Motor neuron (in vitro differentiated cells): ENCODE measurements at regions of chr6 and their contacts with region 1.

Region 1: DNA sequence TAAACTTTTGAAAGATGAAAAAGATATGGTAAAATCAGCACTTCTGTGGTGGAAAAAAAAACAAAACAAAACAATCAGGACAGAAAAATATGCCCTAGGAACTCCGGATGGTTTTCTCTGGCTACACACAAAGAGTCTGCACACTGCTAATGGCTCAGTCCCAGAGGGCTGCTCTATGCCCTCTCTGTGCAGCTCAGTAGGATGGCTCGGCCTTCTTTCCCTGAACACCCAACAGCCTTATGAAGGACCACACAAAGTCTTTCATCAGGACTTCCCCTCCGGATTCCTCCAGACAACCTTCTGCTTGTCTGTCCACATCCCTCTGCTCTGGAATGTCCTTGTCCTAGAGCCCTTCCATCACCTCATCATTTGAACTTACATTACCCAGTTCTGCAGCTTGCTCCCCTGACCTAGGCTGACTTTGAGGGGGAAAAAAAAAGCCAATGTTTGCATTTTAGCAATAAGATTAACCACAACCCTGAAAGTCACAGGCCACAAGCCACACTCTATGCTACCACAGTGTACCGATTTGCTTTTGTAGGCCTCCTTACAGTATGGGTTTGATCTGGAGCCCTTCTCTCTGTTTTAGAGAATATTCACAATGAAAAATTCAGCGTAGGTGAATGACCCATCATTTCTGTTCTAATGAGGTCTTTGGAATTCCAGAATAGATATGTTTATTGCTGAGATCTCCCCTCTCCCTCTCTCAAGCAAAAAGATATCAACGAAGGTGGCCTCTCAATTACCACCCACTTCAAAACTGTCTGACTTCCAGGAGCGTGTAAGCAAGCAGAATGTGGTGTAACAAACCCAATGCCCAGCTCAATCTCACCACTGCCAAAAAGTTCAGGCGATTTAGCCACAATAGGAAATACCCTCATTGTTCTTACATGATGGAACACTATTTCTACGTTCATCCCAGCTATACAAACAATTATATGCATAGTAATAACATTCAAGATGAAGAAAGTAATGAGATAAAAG is 164.0 kb downstream of the GMDS start:
- ATAC-seq: no peak
- H3K4me3 ChIP-seq: no peak overlapping the region
- H3K27ac ChIP-seq: no peak overlapping the region
- H3K4me1 ChIP-seq: peaks cover 2 to 5% of the 10 kb centered on the region in 2 donors

Region 2: GRCh38 chr6:1624851-1625781 is 456.3 kb before region 1 on chr6:
- in situ Hi-C with region 1: loop called in 1 of 9 experiments (anchors 25 kb)
- ATAC-seq: peak; percentile 60 to 95 (median 67)
- H3K4me3 ChIP-seq: peak overlapping the region in 3 of 5 donors; percentile 13 to 27 (median 16)
- H3K27ac ChIP-seq: no peak overlapping the region
- H3K4me1 ChIP-seq: peaks cover 2 to 5% of the 10 kb centered on the region in 2 donors

Region 3: GRCh38 chr6:1832836-1833787 is 248.3 kb before region 1 on chr6:
- in situ Hi-C with region 1: no loop called
- ATAC-seq: peak in 6 of 8 experiments; percentile 26 to 86 (median 78)
- H3K4me3 ChIP-seq: no peak overlapping the region
- H3K27ac ChIP-seq: no peak overlapping the region
- H3K4me1 ChIP-seq: peaks cover 26 to 28% of the 10 kb centered on the region in 2 donors